ENCODE measurements at regions of chr16 and their contacts with region 1.

Region 1: GRCh38 chr16:75653922-75654321 is 6.3 kb downstream of the TERF2IP start:
- DNase-seq: no peak
- ATAC-seq: no peak
- H3K4me3 ChIP-seq: no peak overlapping the region
- H3K4me3 Mint-ChIP-seq: peak overlapping the region; percentile 40
- H3K27ac ChIP-seq: peak overlapping the region in 1 of 2 donors; percentile 40
- H3K27ac Mint-ChIP-seq: no peak overlapping the region
- H3K4me1 ChIP-seq: peaks cover 38 to 39% of the 10 kb centered on the region in 2 donors
- H3K4me1 Mint-ChIP-seq: peaks cover 47% of the 10 kb centered on the region
- H3K27me3 ChIP-seq: no peaks in the 10 kb centered on the region
- H3K27me3 Mint-ChIP-seq: no peaks in the 10 kb centered on the region
- CTCF ChIP-seq: no peak

Region 2: GRCh38 chr16:75635036-75635435 is 18.9 kb before region 1 on chr16:
- CTCF ChIA-PET with region 1: no interaction called
- POLR2A ChIA-PET with region 1: no interaction called
- intact Hi-C with region 1: no loop called
- DNase-seq: no peak
- ATAC-seq: no peak
- H3K4me3 ChIP-seq: no peak overlapping the region
- H3K4me3 Mint-ChIP-seq: no peak overlapping the region
- H3K27ac ChIP-seq: no peak overlapping the region
- H3K27ac Mint-ChIP-seq: no peak overlapping the region
- H3K4me1 ChIP-seq: no peaks in the 10 kb centered on the region
- H3K4me1 Mint-ChIP-seq: no peaks in the 10 kb centered on the region
- H3K27me3 ChIP-seq: no peaks in the 10 kb centered on the region
- H3K27me3 Mint-ChIP-seq: no peaks in the 10 kb centered on the region
- CTCF ChIP-seq: no peak

Region 3: DNA sequence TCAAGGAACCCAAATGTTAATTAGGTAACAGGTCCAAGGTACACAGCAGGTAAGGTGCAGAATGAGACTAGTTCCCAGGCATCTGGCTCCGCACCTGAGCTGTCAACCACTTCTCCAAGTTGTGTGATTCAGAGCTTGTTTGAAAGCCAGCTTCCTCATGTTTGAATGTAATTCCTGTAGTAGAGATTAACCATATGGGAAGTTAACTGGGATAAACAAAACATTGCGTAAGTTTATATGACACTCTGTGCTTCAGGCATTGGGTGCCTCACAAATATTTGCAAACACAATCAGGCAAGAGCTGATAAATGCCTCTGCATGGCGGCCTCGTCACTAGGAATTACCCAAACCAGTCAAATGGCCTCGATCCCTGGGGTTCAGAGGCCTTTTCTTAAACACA is 100.2 kb after region 1 on chr16:
- CTCF ChIA-PET with region 1: interaction called, 3 read pairs
- POLR2A ChIA-PET with region 1: interaction called, 13 read pairs
- intact Hi-C with region 1: no loop called
- DNase-seq: no peak
- ATAC-seq: no peak
- H3K4me3 ChIP-seq: no peak overlapping the region
- H3K4me3 Mint-ChIP-seq: no peak overlapping the region
- H3K27ac ChIP-seq: no peak overlapping the region
- H3K27ac Mint-ChIP-seq: no peak overlapping the region
- H3K4me1 ChIP-seq: peaks cover 0 to 4% of the 10 kb centered on the region in 2 donors
- H3K4me1 Mint-ChIP-seq: peaks cover 5% of the 10 kb centered on the region
- H3K27me3 ChIP-seq: peaks cover 0 to 7% (median 0%) of the 10 kb centered on the region in 4 experiments
- H3K27me3 Mint-ChIP-seq: peaks cover 8% of the 10 kb centered on the region
- CTCF ChIP-seq: no peak